PC-3 (cell line): ENCODE measurements at regions of chr2 and their contacts with region 1.

Region 1: DNA sequence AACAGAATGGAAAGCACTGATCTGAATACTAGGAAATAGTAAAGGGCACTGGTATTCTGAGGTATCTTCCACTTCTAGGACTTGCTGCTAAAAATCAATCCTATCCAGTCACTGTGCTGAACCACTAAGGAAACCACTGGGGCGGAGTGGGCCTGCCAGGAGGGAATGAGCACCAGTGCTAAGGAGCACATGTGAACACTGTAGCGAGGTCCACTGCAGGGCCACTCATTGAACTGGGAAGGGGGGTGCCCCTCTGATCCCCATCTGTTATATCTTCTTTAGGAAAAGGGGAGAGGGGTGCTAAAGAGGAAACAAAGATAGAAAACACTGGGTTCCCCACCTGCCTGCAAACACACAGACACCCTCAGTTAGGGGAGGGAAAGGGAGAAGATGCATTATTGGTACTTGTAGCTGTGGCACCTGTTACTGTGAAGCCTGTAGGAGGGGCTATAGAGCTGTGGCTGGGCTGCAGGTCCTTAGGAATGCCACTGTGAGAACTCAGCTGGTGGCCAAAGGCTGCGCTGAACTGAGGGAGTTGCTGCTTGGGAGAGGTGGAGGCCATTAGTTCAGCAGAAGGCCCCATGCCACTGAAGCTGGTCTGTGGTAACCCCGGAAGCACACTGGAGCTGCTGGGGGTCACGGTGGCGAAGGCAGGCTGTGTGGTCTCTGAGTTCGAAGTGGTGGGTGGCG is 81.8 kb downstream of the INO80D start:
- DNase-seq: peak; percentile 52
- ATAC-seq: peak; percentile 69; the same call in 1 of the 2 replicates
- H3K4me3 ChIP-seq: no peak overlapping the region
- H3K27ac ChIP-seq: no peak overlapping the region
- H3K4me1 ChIP-seq: no peaks in the 10 kb centered on the region
- H3K27me3 ChIP-seq: no peaks in the 10 kb centered on the region
- CTCF ChIP-seq: peak; percentile 62

Region 2: GRCh38 chr2:204561749-204562148 is 1442.4 kb before region 1 on chr2:
- CTCF ChIA-PET with region 1: no interaction called
- POLR2A ChIA-PET with region 1: no interaction called
- intact Hi-C with region 1: no loop called
- DNase-seq: peak; percentile 89
- ATAC-seq: peak; percentile 94
- H3K4me3 ChIP-seq: no peak overlapping the region
- H3K27ac ChIP-seq: 0 out of 2 replicates have a peak overlapping the region, but pooled peaks have one; percentile 2
- H3K4me1 ChIP-seq: peaks cover 13% of the 10 kb centered on the region
- H3K27me3 ChIP-seq: no peaks in the 10 kb centered on the region
- CTCF ChIP-seq: no peak

Region 3: DNA sequence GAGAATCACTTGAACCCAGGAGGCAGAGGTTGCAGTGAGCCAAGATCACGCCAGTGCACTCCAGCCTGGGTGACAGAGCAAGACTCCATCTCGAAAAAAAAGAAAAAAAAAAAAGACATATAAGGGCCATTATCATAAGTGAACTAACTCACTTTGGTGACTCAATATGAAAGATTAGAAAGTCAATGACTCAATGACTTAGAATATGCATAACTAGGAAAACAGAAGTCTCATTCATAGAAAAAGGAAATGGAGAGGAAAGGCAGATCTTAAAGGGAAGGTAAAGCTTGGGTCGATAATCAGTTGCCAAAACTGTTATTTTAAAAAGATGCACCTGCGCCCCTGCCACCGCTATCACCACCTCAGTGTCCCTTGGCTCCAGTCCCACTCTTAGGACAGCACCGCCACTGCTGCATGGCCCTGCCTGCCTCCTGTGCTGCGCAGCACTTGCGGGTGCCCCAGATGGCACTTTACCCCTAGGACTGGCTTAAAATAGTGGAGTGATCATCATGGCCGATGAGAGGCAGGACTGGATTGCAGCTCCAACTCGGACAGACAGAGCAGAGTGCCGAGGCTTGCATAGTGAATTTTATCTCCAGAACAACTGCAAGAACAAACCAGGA is 27.1 kb after region 1 on chr2:
- CTCF ChIA-PET with region 1: no interaction called
- POLR2A ChIA-PET with region 1: interaction called, 12 read pairs
- intact Hi-C with region 1: no loop called
- DNase-seq: peak; percentile 70
- ATAC-seq: peak; percentile 83
- H3K4me3 ChIP-seq: no peak overlapping the region
- H3K27ac ChIP-seq: peak overlapping the region; percentile 26; the same call in 1 of the 2 replicates
- H3K4me1 ChIP-seq: peaks cover 11% of the 10 kb centered on the region
- H3K27me3 ChIP-seq: no peaks in the 10 kb centered on the region
- CTCF ChIP-seq: no peak

Region 4: GRCh38 chr2:206260188-206261012 is 256.3 kb after region 1 on chr2:
- CTCF ChIA-PET with region 1: interaction called, 3 read pairs
- POLR2A ChIA-PET with region 1: no interaction called
- intact Hi-C with region 1: loop called (anchors 10 kb)
- DNase-seq: peak; percentile 66
- ATAC-seq: peak; percentile 96
- H3K4me3 ChIP-seq: no peak overlapping the region
- H3K27ac ChIP-seq: no peak overlapping the region
- H3K4me1 ChIP-seq: no peaks in the 10 kb centered on the region
- H3K27me3 ChIP-seq: peaks cover 68% of the 10 kb centered on the region
- CTCF ChIP-seq: peak; percentile 67